GM23248 (cell line): ENCODE measurements at regions of chr10 and their contacts with region 1.

Region 1: DNA sequence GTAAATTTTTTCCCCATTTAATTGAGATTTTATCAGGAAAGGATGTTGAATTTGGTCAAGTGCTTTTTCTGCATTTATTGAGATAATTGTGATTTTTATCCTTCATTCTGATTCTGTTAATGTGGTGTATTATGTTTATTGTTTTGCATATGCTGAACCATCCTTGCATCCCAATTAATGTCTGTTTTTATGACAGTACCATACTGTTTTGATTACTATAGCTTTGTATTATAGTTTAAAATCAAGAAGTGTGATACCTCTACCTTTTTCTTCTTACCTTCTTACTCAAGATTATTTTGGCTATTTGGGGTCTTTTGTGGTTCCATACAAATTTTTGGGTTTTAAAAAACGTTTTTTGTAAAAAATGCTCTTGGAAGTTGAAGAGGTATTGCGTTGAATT is 357.2 kb downstream of the REEP3 start:
- DNase-seq: no peak
- H3K4me3 ChIP-seq: no peak overlapping the region
- H3K27ac ChIP-seq: no peak overlapping the region
- H3K4me1 ChIP-seq: no peaks in the 10 kb centered on the region
- H3K27me3 ChIP-seq: 0 out of 2 replicates have a peak, but pooled peaks cover 5% of the 10 kb centered on the region

Region 2: DNA sequence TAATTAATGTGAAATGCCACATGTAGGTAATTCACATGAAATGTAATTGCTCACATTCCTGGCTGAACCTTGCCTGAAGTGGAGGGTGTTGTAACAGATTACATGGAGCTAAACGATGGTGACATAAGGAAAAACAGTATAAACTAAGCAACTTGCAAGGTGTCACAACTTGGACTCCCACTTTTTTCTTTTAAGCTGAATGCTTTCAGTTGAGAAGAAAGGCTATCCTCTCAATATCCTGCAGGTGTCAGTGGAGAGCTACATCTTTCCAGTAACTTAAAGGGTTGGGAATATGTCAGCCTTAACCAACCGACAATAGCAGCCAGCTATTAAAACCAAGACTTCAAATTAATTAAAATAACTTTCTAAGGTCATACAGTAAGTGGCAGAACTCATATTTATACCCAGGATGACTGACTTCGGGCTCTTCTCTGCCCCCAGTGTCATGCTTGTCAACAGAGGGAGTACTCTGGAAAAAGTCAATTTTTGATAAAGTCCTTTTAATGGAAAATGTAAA is 711.6 kb before region 1 on chr10:
- in situ Hi-C with region 1: no loop called
- DNase-seq: peak; percentile 82
- H3K4me3 ChIP-seq: no peak overlapping the region
- H3K27ac ChIP-seq: no peak overlapping the region
- H3K4me1 ChIP-seq: peaks cover 8% of the 10 kb centered on the region; the same call in 1 of the 2 replicates
- H3K27me3 ChIP-seq: no peaks in the 10 kb centered on the region

Region 3: GRCh38 chr10:63976538-63976937 is 98.1 kb after region 1 on chr10:
- in situ Hi-C with region 1: loop called (anchors 10 kb)
- DNase-seq: peak; percentile 63
- H3K4me3 ChIP-seq: no peak overlapping the region
- H3K27ac ChIP-seq: no peak overlapping the region
- H3K4me1 ChIP-seq: no peaks in the 10 kb centered on the region
- H3K27me3 ChIP-seq: no peaks in the 10 kb centered on the region

Region 4: DNA sequence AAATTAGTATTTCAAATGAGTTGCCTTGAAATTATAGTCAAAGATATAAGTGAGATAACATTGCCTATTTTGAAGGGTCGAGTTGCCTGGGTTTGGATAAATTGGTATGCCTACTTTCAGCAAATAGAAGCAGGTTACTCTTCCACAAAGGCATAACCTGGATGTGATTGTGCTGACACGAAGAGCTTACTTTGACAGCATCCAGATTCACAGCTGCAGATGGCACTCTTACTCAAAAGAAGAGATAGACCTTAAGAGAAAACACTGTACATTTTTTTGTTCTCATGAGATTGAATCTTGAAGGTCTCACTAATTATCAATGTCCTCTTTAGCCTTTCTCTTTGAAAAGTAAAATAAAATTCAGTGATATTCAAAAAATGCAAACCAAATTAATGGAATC is 981.5 kb after region 1 on chr10:
- in situ Hi-C with region 1: no loop called
- DNase-seq: no peak
- H3K4me3 ChIP-seq: no peak overlapping the region
- H3K27ac ChIP-seq: no peak overlapping the region
- H3K4me1 ChIP-seq: no peaks in the 10 kb centered on the region
- H3K27me3 ChIP-seq: no peaks in the 10 kb centered on the region